Endothelial cell of umbilical vein (primary cell): ENCODE measurements at regions of chr11 and their contacts with region 1.

Region 1: GRCh38 chr11:125592305-125593112 is at the start of gene STT3A:
- DNase-seq: peak; percentile 100
- H3K4me3 ChIP-seq: peak within 1 kb of the TSS; percentile 63 to 96 (median 79)
- H3K27ac ChIP-seq: peak within 1 kb of the TSS; percentile 79
- H3K4me1 ChIP-seq: peaks cover 17% of the 10 kb centered on the region
- H3K27me3 ChIP-seq: no peaks in the 10 kb centered on the region
- CTCF ChIP-seq: no peak
- POLR2A ChIP-seq: peak; percentile 92
- total RNA-seq, gene STT3A: 216 and 236 TPM in 2 replicates

Region 2: DNA sequence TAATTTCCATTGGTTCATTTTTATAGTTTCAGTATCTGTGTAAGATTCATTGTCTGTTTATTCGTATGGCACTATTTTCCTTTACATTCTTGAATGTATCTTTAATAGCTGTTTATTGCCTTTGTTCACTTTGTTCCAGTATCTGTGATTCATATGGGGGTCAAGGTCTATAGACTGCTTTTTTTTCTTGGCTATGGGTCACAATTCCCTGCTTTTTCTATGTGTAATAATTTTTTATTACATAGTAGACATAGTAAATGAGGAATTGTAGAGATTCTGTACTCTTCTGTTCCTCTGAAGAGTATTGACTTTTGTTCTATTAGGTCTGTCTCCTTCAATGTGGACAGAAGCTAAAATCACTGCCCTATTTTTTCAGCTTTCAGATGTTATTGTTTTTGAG is 77.7 kb after region 1 on chr11:
- CTCF ChIA-PET with region 1: no interaction called
- POLR2A ChIA-PET with region 1: no interaction called
- dilution Hi-C with region 1: no loop called
- intact Hi-C with region 1: loop called (anchors 2 kb)
- DNase-seq: peak; percentile 62
- H3K4me3 ChIP-seq: no peak overlapping the region
- H3K27ac ChIP-seq: peak overlapping the region; percentile 30
- H3K4me1 ChIP-seq: peaks cover 48% of the 10 kb centered on the region
- H3K27me3 ChIP-seq: no peaks in the 10 kb centered on the region
- CTCF ChIP-seq: no peak
- POLR2A ChIP-seq: no peak

Region 3: DNA sequence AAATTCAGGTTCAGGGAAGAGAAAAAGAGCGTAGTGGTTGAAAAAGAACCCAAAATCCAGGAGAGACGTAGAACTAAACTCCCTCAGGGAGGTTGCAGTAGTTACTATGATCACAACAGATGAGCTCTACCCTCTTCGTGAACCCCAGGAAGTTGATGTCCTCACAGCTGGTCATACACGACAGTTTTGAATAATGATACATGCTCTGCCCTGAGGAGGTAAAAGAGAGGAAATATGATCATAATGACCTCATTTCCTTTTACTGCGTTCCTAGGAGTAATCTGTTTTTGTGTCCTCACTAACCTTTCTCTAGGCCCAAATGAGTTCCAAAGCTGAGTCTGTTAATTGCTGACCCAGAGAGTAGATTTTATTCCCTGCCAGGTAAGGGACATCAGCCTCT is 184.8 kb after region 1 on chr11:
- CTCF ChIA-PET with region 1: no interaction called
- POLR2A ChIA-PET with region 1: no interaction called
- dilution Hi-C with region 1: no loop called
- intact Hi-C with region 1: loop called (anchors 2 kb)
- DNase-seq: peak; percentile 67
- H3K4me3 ChIP-seq: no peak overlapping the region
- H3K27ac ChIP-seq: peak overlapping the region; percentile 43
- H3K4me1 ChIP-seq: peaks cover 10% of the 10 kb centered on the region
- H3K27me3 ChIP-seq: no peaks in the 10 kb centered on the region
- CTCF ChIP-seq: no peak
- POLR2A ChIP-seq: no peak